Heart right ventricle (tissue), 16 donors: ENCODE measurements at regions of chr15 and their contacts with region 1.

Region 1: GRCh38 chr15:69976366-69976994 is 121.2 kb downstream of the TLE3 start:
- DNase-seq: peak in 1 of 2 donors; percentile 41
- ATAC-seq: peak in 2 of 8 donors; percentile 42 to 48
- H3K4me3 ChIP-seq: no peak overlapping the region
- H3K27ac ChIP-seq: no peak overlapping the region
- H3K4me1 ChIP-seq: no peaks in the 10 kb centered on the region
- H3K27me3 ChIP-seq: peaks cover 0 to 46% (median 29%) of the 10 kb centered on the region in 7 donors
- CTCF ChIP-seq: no peak

Region 2: GRCh38 chr15:69679623-69680228 is 296.8 kb before region 1 on chr15:
- intact Hi-C with region 1: loop called in 1 of 10 experiments (anchors 5 kb)
- DNase-seq: no peak
- ATAC-seq: no peak
- H3K4me3 ChIP-seq: no peak overlapping the region
- H3K27ac ChIP-seq: no peak overlapping the region
- H3K4me1 ChIP-seq: no peaks in the 10 kb centered on the region
- H3K27me3 ChIP-seq: peaks cover 0 to 39% (median 26%) of the 10 kb centered on the region in 7 donors
- CTCF ChIP-seq: no peak

Region 3: GRCh38 chr15:69823218-69823907 is 153.1 kb before region 1 on chr15:
- intact Hi-C with region 1: no loop called
- DNase-seq: no peak
- ATAC-seq: no peak
- H3K4me3 ChIP-seq: no peak overlapping the region
- H3K27ac ChIP-seq: no peak overlapping the region
- H3K4me1 ChIP-seq: no peaks in the 10 kb centered on the region
- H3K27me3 ChIP-seq: peaks cover 0 to 46% (median 13%) of the 10 kb centered on the region in 7 donors
- CTCF ChIP-seq: no peak

Region 4: GRCh38 chr15:69919816-69920215 is 56.7 kb before region 1 on chr15:
- intact Hi-C with region 1: loop called in 1 of 10 experiments (anchors 10 kb)
- DNase-seq: no peak
- ATAC-seq: no peak
- H3K4me3 ChIP-seq: no peak overlapping the region
- H3K27ac ChIP-seq: no peak overlapping the region
- H3K4me1 ChIP-seq: no peaks in the 10 kb centered on the region
- H3K27me3 ChIP-seq: peaks cover 0 to 14% (median 0%) of the 10 kb centered on the region in 7 donors
- CTCF ChIP-seq: no peak

Region 5: DNA sequence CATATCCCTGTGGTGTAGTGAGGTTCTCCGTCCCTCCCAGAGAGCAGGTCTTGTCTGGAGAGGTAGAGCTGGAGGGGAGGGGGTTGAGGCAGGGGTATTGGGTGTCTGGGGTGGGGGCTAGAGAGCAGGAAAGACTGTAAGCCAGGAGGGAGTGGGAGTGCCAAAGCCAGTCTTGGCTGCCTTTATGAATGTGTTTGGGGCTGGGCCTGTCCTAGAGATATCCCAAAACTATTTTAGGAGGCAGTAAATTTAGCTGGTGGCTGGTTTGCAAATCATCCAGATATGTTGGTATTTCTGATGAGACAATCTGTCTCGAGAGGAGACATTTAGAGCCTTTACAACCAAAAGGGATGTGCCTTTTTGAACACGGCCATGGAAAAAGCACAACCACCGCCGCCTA is 45.3 kb before region 1 on chr15:
- intact Hi-C with region 1: no loop called
- DNase-seq: peak in 1 of 2 donors; percentile 37
- ATAC-seq: peak; percentile 82 to 98 (median 92)
- H3K4me3 ChIP-seq: no peak overlapping the region
- H3K27ac ChIP-seq: peak overlapping the region in 7 of 10 donors; percentile 23 to 81 (median 74)
- H3K4me1 ChIP-seq: peaks cover 0 to 24% (median 4%) of the 10 kb centered on the region in 9 donors
- H3K27me3 ChIP-seq: peaks cover 0 to 13% (median 4%) of the 10 kb centered on the region in 7 donors
- CTCF ChIP-seq: no peak

Region 6: DNA sequence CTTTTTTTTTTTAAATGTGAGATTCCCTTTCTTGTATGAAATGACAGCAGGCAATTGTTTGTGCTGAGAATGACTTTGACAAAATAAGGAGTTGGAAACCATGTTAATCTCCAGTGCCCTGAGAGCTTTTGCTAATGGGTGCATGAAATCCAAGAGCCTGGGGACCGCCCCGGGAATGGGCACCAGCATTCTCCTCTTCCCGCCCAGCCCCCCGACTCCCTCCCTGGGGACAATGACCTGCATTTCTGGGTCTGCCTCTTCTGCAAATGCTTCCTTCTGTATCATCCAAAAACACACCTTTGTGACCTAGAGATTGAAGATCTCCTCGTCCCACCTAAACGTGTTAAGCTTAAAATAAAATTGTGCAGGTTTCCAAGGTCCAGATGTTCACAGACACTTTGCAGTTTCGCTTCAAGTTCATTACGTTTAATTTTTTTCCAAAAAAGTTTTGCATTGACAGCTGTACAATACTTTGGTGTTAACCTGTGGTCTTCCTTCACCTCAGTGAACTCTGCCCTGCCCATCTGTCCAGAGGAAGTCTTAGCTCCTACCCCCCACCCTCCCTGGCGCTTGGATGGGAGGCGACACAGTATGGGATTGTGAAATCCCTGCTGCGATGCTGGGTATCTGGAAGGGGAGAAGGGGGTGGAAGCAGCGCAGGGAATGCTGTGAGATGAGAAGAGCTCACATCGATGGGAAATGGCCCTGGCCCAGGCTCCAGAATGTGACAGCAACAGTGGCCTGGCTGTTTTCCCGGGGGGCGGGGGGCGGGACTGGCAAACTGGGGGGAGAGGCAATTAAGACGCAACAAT is 71.1 kb after region 1 on chr15:
- intact Hi-C with region 1: no loop called
- DNase-seq: no peak
- ATAC-seq: peak in 2 of 8 donors; percentile 28 to 33
- H3K4me3 ChIP-seq: no peak overlapping the region
- H3K27ac ChIP-seq: no peak overlapping the region
- H3K4me1 ChIP-seq: peaks cover 0 to 7% (median 0%) of the 10 kb centered on the region in 9 donors
- H3K27me3 ChIP-seq: peaks cover 0 to 5% (median 0%) of the 10 kb centered on the region in 7 donors
- CTCF ChIP-seq: no peak